ENCODE measurements at regions of chr9 and their contacts with region 1.

Region 1: GRCh38 chr9:100028201-100028784 is 70.5 kb downstream of the ERP44 start:
- DNase-seq: peak; percentile 80

Region 2: GRCh38 chr9:100216178-100216787 is 188.0 kb after region 1 on chr9:
- in situ Hi-C with region 1: loop called (anchors 25 kb)
- DNase-seq: peak; percentile 69

Measured in KBM-7 (cell line).